ENCODE measurements at regions of chr1 and their contacts with region 1.

Region 1: GRCh38 chr1:79186260-79186659 is 179.7 kb upstream of the ADGRL4 start:
- DNase-seq: no peak
- ATAC-seq: no peak
- H3K4me3 ChIP-seq: no peak overlapping the region
- H3K27ac ChIP-seq: no peak overlapping the region
- H3K4me1 ChIP-seq: 0 out of 2 replicates have a peak, but pooled peaks cover 2% of the 10 kb centered on the region
- H3K27me3 ChIP-seq: no peaks in the 10 kb centered on the region
- CTCF ChIP-seq: no peak

Region 2: GRCh38 chr1:79243486-79243885 is 57.2 kb after region 1 on chr1:
- CTCF ChIA-PET with region 1: no interaction called
- POLR2A ChIA-PET with region 1: interaction called, 16 read pairs
- in situ Hi-C with region 1: no loop called
- intact Hi-C with region 1: no loop called
- DNase-seq: no peak
- ATAC-seq: no peak
- H3K4me3 ChIP-seq: no peak overlapping the region
- H3K27ac ChIP-seq: no peak overlapping the region
- H3K4me1 ChIP-seq: no peaks in the 10 kb centered on the region
- H3K27me3 ChIP-seq: no peaks in the 10 kb centered on the region
- CTCF ChIP-seq: no peak

Region 3: GRCh38 chr1:79431340-79431739 is 245.1 kb after region 1 on chr1:
- CTCF ChIA-PET with region 1: no interaction called
- POLR2A ChIA-PET with region 1: no interaction called
- in situ Hi-C with region 1: no loop called
- intact Hi-C with region 1: no loop called
- DNase-seq: no peak
- ATAC-seq: no peak
- H3K4me3 ChIP-seq: no peak overlapping the region
- H3K27ac ChIP-seq: no peak overlapping the region
- H3K4me1 ChIP-seq: no peaks in the 10 kb centered on the region
- H3K27me3 ChIP-seq: no peaks in the 10 kb centered on the region
- CTCF ChIP-seq: no peak

Region 4: GRCh38 chr1:79646895-79647294 is 460.6 kb after region 1 on chr1:
- CTCF ChIA-PET with region 1: no interaction called
- POLR2A ChIA-PET with region 1: no interaction called
- in situ Hi-C with region 1: no loop called
- intact Hi-C with region 1: no loop called
- DNase-seq: no peak
- ATAC-seq: no peak
- H3K4me3 ChIP-seq: no peak overlapping the region
- H3K27ac ChIP-seq: no peak overlapping the region
- H3K4me1 ChIP-seq: no peaks in the 10 kb centered on the region
- H3K27me3 ChIP-seq: no peaks in the 10 kb centered on the region
- CTCF ChIP-seq: no peak

Measured in Panc1 (cell line).